Activated CD8-positive, alpha-beta T cell treated with anti-CD3 and anti-CD28 coated beads for 36 hours (primary cell): ENCODE measurements at regions of chr15 and their contacts with region 1.

Region 1: DNA sequence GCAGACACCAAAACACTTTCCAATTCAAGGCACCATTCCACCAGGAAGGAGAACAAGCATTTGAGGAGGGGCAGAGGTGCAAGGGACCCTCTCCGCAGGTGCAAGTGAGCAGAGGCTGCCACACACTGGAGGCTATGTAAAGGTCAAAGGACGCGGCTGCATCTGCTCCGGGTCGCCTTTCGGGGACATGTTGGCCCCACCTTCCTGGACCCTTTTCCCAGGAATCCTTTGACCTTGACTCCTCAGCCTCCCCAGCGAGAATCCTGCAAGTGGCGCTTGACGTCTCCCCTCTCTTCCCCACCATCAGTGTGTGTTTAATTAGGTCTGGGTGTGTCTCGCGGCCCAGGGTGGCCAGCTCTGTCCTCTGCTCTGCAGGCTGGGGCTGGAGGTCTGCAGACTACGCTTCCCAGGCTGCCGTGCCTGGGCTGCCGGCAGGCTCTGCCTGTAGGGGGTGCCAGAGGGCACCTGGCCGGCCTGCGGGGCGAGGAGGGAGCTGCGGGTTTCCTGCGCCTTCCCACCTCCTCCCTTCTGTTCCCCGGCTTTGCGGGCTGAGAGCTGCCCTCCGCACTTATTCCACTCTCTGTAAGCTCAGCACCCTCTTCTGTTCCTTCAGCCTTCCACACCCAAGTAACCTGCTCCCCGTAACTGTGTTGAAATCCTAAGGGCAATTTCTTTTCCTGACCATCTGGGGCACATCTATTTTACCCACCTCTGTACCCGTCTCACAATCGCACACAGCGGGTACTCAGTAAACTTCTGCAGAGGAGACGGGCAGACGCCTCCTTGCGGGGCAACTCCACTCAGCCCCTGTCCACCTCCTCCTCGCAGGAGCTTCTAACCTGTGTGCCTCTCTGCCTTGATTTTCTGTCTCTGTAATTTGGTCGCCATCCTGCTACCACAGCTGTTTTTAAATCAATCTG is 129.8 kb downstream of the NSMCE3 start:
- DNase-seq: peak; percentile 62
- ATAC-seq: peak; percentile 97
- H3K4me3 Mint-ChIP-seq: no peak overlapping the region
- H3K27ac Mint-ChIP-seq: no peak overlapping the region
- H3K4me1 Mint-ChIP-seq: peaks cover 7% of the 10 kb centered on the region
- H3K27me3 Mint-ChIP-seq: peaks cover 50% of the 10 kb centered on the region
- CTCF ChIP-seq: peak; percentile 87

Region 2: DNA sequence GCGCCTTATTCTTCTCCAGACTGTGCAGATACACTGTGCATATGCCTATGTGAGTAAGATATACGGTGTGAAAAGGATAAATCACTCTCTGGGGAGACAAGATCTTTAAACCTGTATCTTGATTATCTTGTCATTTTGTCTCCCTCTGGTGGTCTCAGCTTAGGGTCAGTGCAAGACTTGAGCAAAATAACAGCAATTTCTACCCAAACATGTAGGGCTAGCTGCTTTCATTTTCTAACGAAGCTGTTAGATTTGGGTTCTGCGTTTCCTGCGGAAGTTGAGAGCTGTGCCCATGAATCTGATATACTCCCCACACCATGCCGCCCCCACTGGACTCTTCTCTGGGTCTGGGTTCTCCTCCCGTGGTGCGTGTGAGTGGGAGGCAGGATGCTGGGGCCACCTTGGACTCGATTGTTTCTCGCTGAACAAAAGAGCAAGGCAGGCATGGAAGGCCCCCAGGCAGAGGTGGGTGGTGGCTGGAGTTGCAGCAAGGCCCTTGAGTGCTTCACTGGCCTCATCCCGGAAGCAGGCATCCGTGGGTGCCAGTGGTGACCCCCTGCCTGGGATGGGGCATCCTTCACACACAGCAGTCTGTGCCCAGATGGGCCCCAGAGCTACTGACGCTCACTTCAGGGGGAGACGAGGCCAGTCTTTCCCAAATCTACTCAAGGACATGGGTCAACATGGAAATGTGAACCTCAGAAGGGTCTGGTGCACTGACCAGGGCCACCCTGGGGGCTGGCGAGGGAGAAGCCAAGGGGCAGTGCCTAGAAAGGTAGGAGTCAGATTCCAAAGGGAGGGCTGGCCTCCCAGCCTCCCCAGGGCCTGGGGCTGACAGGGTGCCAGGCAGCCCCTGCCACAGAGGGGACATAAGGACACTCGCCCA is 49.8 kb before region 1 on chr15:
- CTCF ChIA-PET with region 1: no interaction called
- POLR2A ChIA-PET with region 1: no interaction called
- intact Hi-C with region 1: no loop called
- DNase-seq: peak; percentile 75
- ATAC-seq: peak; percentile 80
- H3K4me3 Mint-ChIP-seq: peak overlapping the region; percentile 34
- H3K27ac Mint-ChIP-seq: peak overlapping the region; percentile 71
- H3K4me1 Mint-ChIP-seq: peaks cover 28% of the 10 kb centered on the region
- H3K27me3 Mint-ChIP-seq: no peaks in the 10 kb centered on the region
- CTCF ChIP-seq: no peak

Region 3: DNA sequence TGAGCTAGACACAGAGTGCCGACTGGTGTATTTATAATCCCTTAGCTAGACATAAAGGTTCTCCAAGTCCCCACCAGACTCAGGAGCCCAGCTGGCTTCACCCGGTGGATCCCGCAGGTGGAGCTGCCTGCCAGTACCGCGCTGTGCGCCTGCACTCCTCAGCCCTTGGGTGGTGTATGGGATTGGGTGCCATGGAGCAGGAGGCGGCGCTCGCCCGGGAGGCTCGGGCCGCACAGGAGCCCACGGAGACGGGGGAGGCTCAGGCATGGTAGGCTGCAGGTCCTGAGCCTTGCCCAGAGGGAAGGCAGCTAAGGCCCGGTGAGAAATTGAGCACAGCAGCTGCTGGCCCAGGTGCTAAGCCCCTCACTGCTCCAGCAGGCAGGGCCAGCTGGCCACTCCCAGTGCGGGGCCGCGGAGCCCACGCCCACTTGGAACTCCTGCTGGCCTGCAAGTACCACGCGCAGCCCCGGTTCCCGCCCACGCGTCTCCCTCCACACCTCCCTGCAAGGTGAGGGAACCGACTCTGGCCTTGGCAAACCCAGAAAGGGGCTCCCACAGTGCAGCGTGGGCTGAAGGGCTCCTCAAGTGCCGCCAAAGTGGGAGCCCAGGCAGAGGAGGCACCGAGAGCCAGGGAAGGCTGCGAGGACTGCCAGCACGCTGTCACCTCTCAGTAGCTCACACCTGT is 20.1 kb after region 1 on chr15:
- CTCF ChIA-PET with region 1: interaction called, 13 read pairs
- POLR2A ChIA-PET with region 1: no interaction called
- intact Hi-C with region 1: no loop called
- DNase-seq: no peak
- ATAC-seq: no peak
- H3K4me3 Mint-ChIP-seq: no peak overlapping the region
- H3K27ac Mint-ChIP-seq: no peak overlapping the region
- H3K4me1 Mint-ChIP-seq: peaks cover 6% of the 10 kb centered on the region
- H3K27me3 Mint-ChIP-seq: peaks cover 40% of the 10 kb centered on the region
- CTCF ChIP-seq: no peak

Region 4: DNA sequence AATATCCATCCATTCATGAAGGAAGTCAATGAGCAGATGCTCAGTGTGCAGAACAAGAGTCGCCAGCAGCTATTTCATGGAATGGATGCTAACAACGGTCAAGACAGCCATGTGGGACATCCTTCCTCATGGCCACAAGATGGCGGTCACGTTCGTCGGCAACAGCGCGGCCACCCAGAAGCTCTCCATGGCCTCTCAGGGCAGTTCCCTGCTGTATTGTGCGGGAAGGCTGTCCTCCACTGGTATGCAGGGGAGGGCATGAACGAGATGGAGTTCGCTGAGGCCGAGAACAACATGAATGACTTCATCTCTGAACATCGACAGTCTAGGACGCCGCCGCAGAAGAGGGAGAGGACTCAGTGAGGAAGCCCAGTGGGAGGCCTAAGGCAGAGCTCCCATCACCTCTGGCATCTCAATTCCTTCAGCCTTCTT is 474.2 kb after region 1 on chr15:
- CTCF ChIA-PET with region 1: no interaction called
- POLR2A ChIA-PET with region 1: no interaction called
- intact Hi-C with region 1: loop called (anchors 5 kb)
- DNase-seq: no peak
- ATAC-seq: no peak
- H3K4me3 Mint-ChIP-seq: no peak overlapping the region
- H3K27ac Mint-ChIP-seq: no peak overlapping the region
- H3K4me1 Mint-ChIP-seq: no peaks in the 10 kb centered on the region
- H3K27me3 Mint-ChIP-seq: peaks cover 17% of the 10 kb centered on the region
- CTCF ChIP-seq: no peak